MCF 10A (cell line): ENCODE measurements at regions of chr11 and their contacts with region 1.

Region 1: DNA sequence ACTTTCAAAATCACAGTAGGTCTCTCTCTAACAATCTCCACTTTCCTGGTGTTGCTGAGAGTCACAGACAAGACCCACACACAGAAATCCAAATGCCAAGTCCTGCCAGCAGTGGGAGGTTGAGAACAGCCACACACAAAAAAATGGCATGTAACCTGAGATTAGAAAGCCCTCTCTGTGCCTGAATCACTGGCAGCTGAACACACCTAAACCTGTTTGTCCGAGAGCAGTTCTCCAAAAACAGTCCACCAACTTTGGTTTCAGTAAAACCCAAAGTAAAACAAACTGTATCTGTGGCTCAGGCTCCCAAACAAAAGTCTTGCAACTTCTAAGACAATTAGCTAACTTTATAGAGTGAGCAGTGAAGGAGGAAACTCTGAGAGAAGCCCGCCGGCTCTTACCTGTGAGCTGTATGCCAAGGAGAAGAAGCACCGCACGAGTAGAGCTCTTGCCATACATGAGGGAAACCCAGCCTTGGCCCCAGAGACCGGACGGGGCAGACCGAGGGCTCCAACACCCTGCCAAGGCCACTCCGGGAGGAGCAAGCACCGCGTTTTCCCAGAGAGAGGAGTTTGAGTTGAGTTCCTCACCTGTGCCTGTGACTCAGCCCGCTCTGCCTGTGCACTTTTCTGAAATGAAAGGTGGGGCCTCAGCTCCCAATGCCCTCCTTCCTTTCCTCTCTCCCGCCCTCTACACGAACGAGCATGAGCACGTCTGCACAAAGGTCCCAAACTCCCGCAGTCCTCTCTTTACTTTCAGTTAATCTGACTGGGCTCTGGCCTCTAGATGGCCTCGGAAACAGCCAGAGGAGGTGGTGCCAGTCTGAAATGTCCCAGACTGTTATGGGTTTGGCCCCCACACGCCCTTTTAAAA is at the start of gene MPZL2:
- DNase-seq: peak; percentile 93
- H3K4me3 Mint-ChIP-seq: peak within 1 kb of the TSS; percentile 93
- H3K27ac Mint-ChIP-seq: peak within 1 kb of the TSS; percentile 95
- H3K4me1 Mint-ChIP-seq: peaks cover 44% of the 10 kb centered on the region
- H3K27me3 Mint-ChIP-seq: no peaks in the 10 kb centered on the region
- CTCF ChIP-seq: no peak
- total RNA-seq, gene MPZL2: 7.0 and 13.7 TPM in 2 replicates

Region 2: DNA sequence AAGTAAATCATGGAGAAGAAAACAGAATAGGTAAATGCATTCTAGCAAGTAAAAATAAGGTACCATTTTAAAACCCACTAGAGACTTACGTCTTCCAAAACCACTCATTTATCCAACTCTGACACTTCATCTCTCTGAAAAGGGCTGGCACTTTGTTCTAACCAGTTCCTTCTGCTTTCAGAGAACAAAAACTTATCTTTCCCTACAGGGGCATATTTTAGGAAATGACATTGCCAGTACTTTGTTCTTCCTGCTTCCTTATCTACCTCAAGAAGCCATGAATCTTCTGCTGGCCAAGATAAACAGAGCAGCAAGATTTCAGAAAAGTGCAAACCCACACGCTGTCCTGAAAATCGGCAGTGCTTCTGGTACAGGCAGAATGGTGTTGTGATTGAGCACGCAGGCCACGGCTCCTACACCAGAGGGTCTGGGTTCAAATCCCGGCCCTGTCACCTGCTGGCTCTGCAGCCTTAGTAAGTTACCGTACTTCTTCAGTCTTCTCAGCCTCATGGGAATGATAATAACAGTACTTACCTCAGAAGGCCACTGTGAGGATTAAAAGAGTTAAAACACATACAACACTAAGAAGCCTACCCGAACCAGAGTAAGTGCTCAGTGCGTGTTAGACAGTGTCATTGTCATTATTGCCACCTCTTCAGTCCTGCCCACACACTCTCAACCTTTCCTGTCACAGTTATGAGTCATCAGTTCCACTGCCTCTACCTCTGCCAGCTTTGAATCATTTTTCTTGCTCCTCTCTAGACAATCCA is 22.7 kb before region 1 on chr11:
- CTCF ChIA-PET with region 1: interaction called, 5 read pairs
- POLR2A ChIA-PET with region 1: interaction called, 39 read pairs
- intact Hi-C with region 1: no loop called
- DNase-seq: peak; percentile 57
- H3K4me3 Mint-ChIP-seq: peak overlapping the region; percentile 35
- H3K27ac Mint-ChIP-seq: peak overlapping the region; percentile 70
- H3K4me1 Mint-ChIP-seq: peaks cover 25% of the 10 kb centered on the region
- H3K27me3 Mint-ChIP-seq: no peaks in the 10 kb centered on the region
- CTCF ChIP-seq: no peak

Region 3: GRCh38 chr11:118251858-118252652 is 11.9 kb before region 1 on chr11 and contains the start of gene MPZL3:
- CTCF ChIA-PET with region 1: interaction called, 9 read pairs
- POLR2A ChIA-PET with region 1: interaction called, 225 read pairs
- intact Hi-C with region 1: no loop called
- DNase-seq: peak; percentile 96
- H3K4me3 Mint-ChIP-seq: peak within 1 kb of the TSS; percentile 97
- H3K27ac Mint-ChIP-seq: peak within 1 kb of the TSS; percentile 99
- H3K4me1 Mint-ChIP-seq: peaks cover 18% of the 10 kb centered on the region
- H3K27me3 Mint-ChIP-seq: no peaks in the 10 kb centered on the region
- CTCF ChIP-seq: no peak
- total RNA-seq, gene MPZL3: 11.9 and 17.7 TPM in 2 replicates

Region 4: GRCh38 chr11:118290923-118291322 is 27.0 kb after region 1 on chr11:
- CTCF ChIA-PET with region 1: interaction called, 24 read pairs
- POLR2A ChIA-PET with region 1: interaction called, 92 read pairs
- intact Hi-C with region 1: no loop called
- DNase-seq: peak; percentile 75
- H3K4me3 Mint-ChIP-seq: peak overlapping the region; percentile 19
- H3K27ac Mint-ChIP-seq: no peak overlapping the region
- H3K4me1 Mint-ChIP-seq: peaks cover 19% of the 10 kb centered on the region
- H3K27me3 Mint-ChIP-seq: no peaks in the 10 kb centered on the region
- CTCF ChIP-seq: peak; percentile 43

Region 5: DNA sequence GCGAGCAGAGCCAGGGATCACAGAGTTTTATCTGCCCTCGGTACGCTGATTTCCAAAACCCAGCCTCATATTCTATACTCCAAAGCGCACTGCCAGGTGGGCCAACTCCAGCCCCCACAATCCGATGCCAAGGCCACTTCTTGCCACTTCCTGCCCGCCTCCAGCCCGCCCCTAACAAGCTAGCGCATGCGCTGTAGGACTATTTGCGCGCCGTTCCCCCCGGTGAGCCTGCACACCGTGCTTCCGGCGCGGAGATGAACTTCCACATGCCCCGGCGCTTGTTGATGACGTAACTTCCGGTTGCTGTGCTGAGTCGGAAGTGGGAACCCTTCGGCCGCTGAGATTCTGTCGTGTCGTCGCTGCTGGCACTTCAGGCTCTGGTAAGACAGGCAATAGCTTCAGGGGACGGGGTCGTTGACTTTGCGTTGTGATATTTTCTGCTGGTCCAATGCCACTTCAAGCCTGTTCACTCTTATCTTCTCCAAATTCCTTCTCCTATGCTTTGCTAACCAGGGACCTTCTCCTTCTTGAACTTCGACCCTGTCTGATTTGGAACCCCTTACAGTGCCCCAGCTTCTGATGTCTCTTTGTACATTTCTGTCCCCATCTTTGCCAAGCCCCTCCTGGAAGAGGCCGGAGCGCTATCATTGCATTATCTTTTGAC is 95.5 kb after region 1 on chr11 and contains the start of gene UBE4A:
- CTCF ChIA-PET with region 1: no interaction called
- POLR2A ChIA-PET with region 1: interaction called, 12 read pairs
- intact Hi-C with region 1: no loop called
- DNase-seq: peak; percentile 91
- H3K4me3 Mint-ChIP-seq: peak within 1 kb of the TSS; percentile 90
- H3K27ac Mint-ChIP-seq: peak within 1 kb of the TSS; percentile 89
- H3K4me1 Mint-ChIP-seq: no peaks in the 10 kb centered on the region
- H3K27me3 Mint-ChIP-seq: peaks cover 12% of the 10 kb centered on the region
- CTCF ChIP-seq: no peak
- total RNA-seq, gene UBE4A: 41.0 and 47.7 TPM in 2 replicates